IMR-90 (cell line): ENCODE measurements at regions of chr2 and their contacts with region 1.

Region 1: DNA sequence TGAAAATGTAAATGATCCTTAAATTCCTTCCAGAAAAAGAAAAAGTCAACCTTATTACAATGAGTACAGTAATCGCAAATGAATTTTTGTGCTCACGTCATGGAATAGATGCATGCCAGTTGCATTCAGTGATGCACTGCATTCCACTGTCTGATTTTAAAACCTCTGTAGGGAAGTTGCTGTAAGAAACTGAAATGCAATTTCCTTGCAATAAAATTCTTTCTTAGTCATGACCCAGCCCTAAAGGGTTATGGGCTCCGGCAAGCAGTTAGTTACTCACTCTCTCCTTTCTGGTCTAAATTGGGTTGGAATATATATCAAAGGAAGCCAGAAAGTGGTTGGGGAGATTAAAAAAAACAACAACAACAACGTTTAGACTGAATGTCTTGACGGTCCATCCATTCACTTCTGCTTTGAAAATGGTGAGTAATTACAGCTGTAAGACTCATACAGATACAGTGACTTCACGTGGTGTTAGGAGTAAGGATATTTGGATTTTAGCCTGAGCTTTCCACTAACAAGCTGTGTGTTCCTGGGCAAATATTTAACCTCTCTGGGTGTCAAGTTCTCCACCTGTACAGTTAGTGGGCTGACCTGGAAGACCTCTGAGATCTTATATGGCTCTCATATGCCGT is 8.6 kb upstream of the RND3 start:
- DNase-seq: peak; percentile 99
- ATAC-seq: peak; percentile 82
- H3K4me3 ChIP-seq: peak overlapping the region; percentile 35; the same call in 1 of the 2 replicates
- H3K27ac ChIP-seq: peak overlapping the region; percentile 91
- H3K4me1 ChIP-seq: peaks cover 9% of the 10 kb centered on the region
- H3K27me3 ChIP-seq: no peaks in the 10 kb centered on the region
- CTCF ChIP-seq: no peak
- POLR2A ChIP-seq: peak; percentile 18; the same call in 1 of the 2 replicates
- RAD21 ChIP-seq: 0 out of 2 replicates have a peak, but pooled peaks have one; percentile 8

Region 2: DNA sequence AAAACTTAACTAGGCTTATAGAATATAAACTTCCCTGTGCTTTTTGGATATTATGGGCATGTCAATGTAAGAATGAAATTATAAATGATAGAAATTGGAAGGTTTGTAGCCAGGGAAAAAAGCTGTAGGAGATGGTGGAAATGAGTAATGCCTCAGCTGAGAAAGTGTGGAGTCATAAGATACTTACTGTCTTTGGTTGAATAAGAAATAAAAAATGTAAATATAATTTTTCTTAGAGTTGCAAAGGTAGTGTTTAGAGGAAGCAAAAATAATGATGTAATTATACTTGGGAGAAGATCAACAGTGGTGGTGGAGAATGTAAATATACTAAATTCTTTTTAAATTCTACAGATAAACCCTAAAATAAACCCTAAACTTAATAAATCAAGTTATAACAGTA is 17.5 kb after region 1 on chr2:
- CTCF ChIA-PET with region 1: interaction called, 3 read pairs
- POLR2A ChIA-PET with region 1: no interaction called
- dilution Hi-C with region 1: no loop called
- in situ Hi-C with region 1: no loop called
- intact Hi-C with region 1: loop called (anchors 2 kb)
- DNase-seq: peak; percentile 91
- ATAC-seq: peak; percentile 88
- H3K4me3 ChIP-seq: no peak overlapping the region
- H3K27ac ChIP-seq: no peak overlapping the region; the same call in 1 of the 2 replicates
- H3K4me1 ChIP-seq: peaks cover 11% of the 10 kb centered on the region
- H3K27me3 ChIP-seq: no peaks in the 10 kb centered on the region
- CTCF ChIP-seq: no peak
- POLR2A ChIP-seq: no peak
- RAD21 ChIP-seq: no peak

Region 3: DNA sequence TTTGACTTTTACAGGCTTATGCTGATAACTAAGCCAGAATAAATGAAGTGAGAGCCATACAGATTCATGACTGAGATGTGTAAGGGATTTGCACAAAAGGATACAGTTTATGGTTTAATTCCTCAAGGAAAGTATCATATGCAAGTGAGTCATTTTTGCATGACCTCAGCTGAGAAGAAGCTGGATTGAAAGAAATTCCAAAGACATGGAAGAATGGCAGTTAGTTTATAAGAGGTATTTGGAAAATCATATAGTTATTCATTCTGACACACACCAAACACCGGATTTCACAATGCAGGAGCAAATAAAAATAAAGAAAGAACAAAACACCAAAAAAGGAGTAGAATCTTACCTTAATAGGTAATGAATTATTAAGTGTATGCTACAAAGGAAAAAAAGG is 74.6 kb after region 1 on chr2:
- CTCF ChIA-PET with region 1: no interaction called
- POLR2A ChIA-PET with region 1: interaction called, 3 read pairs
- dilution Hi-C with region 1: no loop called
- in situ Hi-C with region 1: no loop called
- intact Hi-C with region 1: loop called (anchors 5 kb)
- DNase-seq: peak; percentile 96
- ATAC-seq: peak; percentile 80
- H3K4me3 ChIP-seq: no peak overlapping the region
- H3K27ac ChIP-seq: peak overlapping the region; percentile 98; the same call in 1 of the 2 replicates
- H3K4me1 ChIP-seq: peaks cover 24% of the 10 kb centered on the region
- H3K27me3 ChIP-seq: no peaks in the 10 kb centered on the region
- CTCF ChIP-seq: no peak
- POLR2A ChIP-seq: no peak
- RAD21 ChIP-seq: no peak

Region 4: DNA sequence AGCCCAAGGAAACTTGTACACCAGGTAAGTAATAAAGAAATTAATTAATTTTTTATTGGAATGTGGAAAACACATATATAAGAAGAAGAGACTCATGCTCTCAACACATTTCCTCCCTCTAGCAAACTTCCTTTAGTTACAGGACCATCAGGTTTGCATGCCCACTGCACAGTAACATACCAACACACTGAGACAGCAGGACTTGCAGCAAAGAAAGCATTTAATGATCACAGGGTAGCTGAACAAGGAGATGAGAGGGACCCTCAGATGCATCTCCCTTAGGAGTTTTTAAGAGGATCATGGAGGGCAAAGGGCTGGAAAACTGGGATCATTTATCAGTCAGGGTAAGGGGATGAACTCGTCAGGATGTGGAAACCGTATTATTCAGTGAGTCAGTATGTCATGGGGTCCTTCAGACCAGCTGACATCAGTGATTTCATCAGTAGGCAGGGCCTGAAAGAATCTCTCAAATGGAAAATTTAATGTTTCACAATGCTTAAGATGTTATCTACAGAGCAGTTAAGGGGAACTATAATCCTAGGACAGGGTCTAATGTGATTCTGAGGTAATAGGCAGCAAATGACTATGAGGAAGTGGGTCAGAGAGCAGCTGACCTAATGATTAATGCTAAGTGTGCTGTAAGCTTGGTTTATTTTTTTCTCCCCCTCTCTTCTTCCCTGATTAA is 185.2 kb after region 1 on chr2:
- CTCF ChIA-PET with region 1: no interaction called
- POLR2A ChIA-PET with region 1: no interaction called
- dilution Hi-C with region 1: no loop called
- in situ Hi-C with region 1: no loop called
- intact Hi-C with region 1: no loop called
- DNase-seq: peak; percentile 97
- ATAC-seq: peak; percentile 83
- H3K4me3 ChIP-seq: no peak overlapping the region
- H3K27ac ChIP-seq: peak overlapping the region; percentile 81
- H3K4me1 ChIP-seq: peaks cover 7% of the 10 kb centered on the region; the same call in 1 of the 2 replicates
- H3K27me3 ChIP-seq: no peaks in the 10 kb centered on the region
- CTCF ChIP-seq: no peak
- POLR2A ChIP-seq: no peak
- RAD21 ChIP-seq: peak; percentile 16; the same call in 1 of the 2 replicates

Region 5: GRCh38 chr2:150878356-150878755 is 382.2 kb after region 1 on chr2:
- CTCF ChIA-PET with region 1: no interaction called
- POLR2A ChIA-PET with region 1: no interaction called
- dilution Hi-C with region 1: no loop called
- in situ Hi-C with region 1: no loop called
- intact Hi-C with region 1: loop called (anchors 10 kb)
- DNase-seq: peak; percentile 52
- ATAC-seq: no peak
- H3K4me3 ChIP-seq: no peak overlapping the region
- H3K27ac ChIP-seq: no peak overlapping the region
- H3K4me1 ChIP-seq: peaks cover 9% of the 10 kb centered on the region
- H3K27me3 ChIP-seq: no peaks in the 10 kb centered on the region
- CTCF ChIP-seq: no peak
- POLR2A ChIP-seq: no peak
- RAD21 ChIP-seq: no peak

Region 6: GRCh38 chr2:151032741-151033191 is 536.7 kb after region 1 on chr2:
- CTCF ChIA-PET with region 1: no interaction called
- POLR2A ChIA-PET with region 1: no interaction called
- dilution Hi-C with region 1: no loop called
- in situ Hi-C with region 1: loop called (anchors 10 kb)
- intact Hi-C with region 1: no loop called
- DNase-seq: peak; percentile 100
- ATAC-seq: peak; percentile 85
- H3K4me3 ChIP-seq: no peak overlapping the region
- H3K27ac ChIP-seq: peak overlapping the region; percentile 71; the same call in 1 of the 2 replicates
- H3K4me1 ChIP-seq: peaks cover 5% of the 10 kb centered on the region
- H3K27me3 ChIP-seq: no peaks in the 10 kb centered on the region
- CTCF ChIP-seq: no peak
- POLR2A ChIP-seq: no peak
- RAD21 ChIP-seq: no peak